ENCODE measurements at regions of chr19 and their contacts with region 1.

Region 1: GRCh38 chr19:44304659-44305193 is at the start of gene ZNF235:
- DNase-seq: peak; percentile 87
- ATAC-seq: peak; percentile 97
- H3K4me3 Mint-ChIP-seq: peak within 1 kb of the TSS; percentile 83
- H3K27ac Mint-ChIP-seq: peak within 1 kb of the TSS; percentile 64
- H3K4me1 Mint-ChIP-seq: peaks cover 12% of the 10 kb centered on the region
- H3K27me3 Mint-ChIP-seq: no peaks in the 10 kb centered on the region
- total RNA-seq, gene ZNF235: 2.1 to 2.7 TPM

Region 2: DNA sequence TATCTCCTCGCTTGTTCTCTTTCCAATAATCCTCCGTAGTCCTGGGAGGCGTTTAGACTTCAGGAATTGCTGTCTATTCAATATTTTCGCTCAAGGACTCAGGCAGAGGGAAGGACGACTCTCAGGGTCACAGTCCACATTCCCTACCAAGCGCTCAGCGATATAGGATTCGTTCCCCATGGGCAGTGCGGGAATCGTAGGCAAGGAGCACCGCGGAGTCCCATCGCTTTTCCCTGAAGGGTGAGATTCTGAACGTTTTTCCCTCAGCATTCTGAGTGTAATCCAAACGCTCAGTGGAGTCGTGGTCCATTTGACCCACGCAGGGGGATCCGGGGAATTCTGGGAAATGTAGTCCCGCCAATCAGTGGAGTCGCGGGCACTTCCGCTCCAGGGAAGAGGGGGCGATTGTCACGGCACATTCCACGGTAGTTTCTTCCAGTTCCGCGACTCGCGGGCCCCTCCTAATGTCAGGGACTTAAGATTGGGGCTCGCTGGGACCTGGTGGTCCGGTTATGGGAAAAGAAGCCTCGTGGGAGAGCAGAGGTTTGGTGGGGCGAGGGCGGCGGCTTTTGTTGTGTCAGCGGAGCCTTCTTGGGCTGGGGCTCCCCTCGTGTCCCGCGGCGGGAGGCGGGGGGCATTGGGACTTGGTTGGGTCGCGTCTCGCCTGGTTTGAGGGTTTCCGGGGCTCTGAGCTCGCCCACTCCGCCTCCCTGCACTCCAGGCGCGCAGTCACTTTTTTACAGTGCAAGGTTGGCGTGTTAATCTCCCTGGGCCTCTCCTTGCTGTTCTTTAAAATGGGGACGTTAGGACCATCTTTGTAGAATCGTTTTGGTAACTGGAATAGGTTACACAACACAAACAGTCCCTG is 163.3 kb before region 1 on chr19 and contains the start of gene ZNF234:
- CTCF ChIA-PET with region 1: no interaction called
- POLR2A ChIA-PET with region 1: no interaction called
- intact Hi-C with region 1: loop called in 1 of 2 experiments (anchors 1 kb)
- DNase-seq: peak; percentile 82
- ATAC-seq: peak; percentile 92
- H3K4me3 Mint-ChIP-seq: peak within 1 kb of the TSS; percentile 92
- H3K27ac Mint-ChIP-seq: peak within 1 kb of the TSS; percentile 94
- H3K4me1 Mint-ChIP-seq: peaks cover 12% of the 10 kb centered on the region
- H3K27me3 Mint-ChIP-seq: no peaks in the 10 kb centered on the region
- total RNA-seq, gene ZNF234: 7.9 to 10.4 TPM

Region 3: GRCh38 chr19:44207126-44207803 is 97.5 kb before region 1 on chr19:
- CTCF ChIA-PET with region 1: interaction called, 4 read pairs
- POLR2A ChIA-PET with region 1: no interaction called
- intact Hi-C with region 1: loop called (anchors 1 to 2 kb)
- DNase-seq: peak; percentile 84
- ATAC-seq: peak; percentile 93
- H3K4me3 Mint-ChIP-seq: peak overlapping the region; percentile 80
- H3K27ac Mint-ChIP-seq: peak overlapping the region; percentile 73
- H3K4me1 Mint-ChIP-seq: peaks cover 4% of the 10 kb centered on the region
- H3K27me3 Mint-ChIP-seq: peaks cover 2% of the 10 kb centered on the region

Region 4: GRCh38 chr19:44401139-44402115 is 96.7 kb after region 1 on chr19 and contains the start of gene ZNF285:
- CTCF ChIA-PET with region 1: no interaction called
- POLR2A ChIA-PET with region 1: no interaction called
- intact Hi-C with region 1: loop called in 1 of 2 experiments (anchors 1 kb)
- DNase-seq: peak; percentile 91
- ATAC-seq: peak; percentile 99
- H3K4me3 Mint-ChIP-seq: peak within 1 kb of the TSS; percentile 75
- H3K27ac Mint-ChIP-seq: peak within 1 kb of the TSS; percentile 76
- H3K4me1 Mint-ChIP-seq: peaks cover 10% of the 10 kb centered on the region
- H3K27me3 Mint-ChIP-seq: no peaks in the 10 kb centered on the region
- total RNA-seq, gene ZNF285: 1.2 to 1.4 TPM